Common myeloid progenitor, CD34-positive (primary cell): ENCODE measurements at regions of chr17 and their contacts with region 1.

Region 1: GRCh38 chr17:75077496-75078283 is 10.1 kb upstream of the SLC16A5 start:
- DNase-seq: peak; percentile 47 to 82 (median 72)
- H3K4me3 ChIP-seq: peak overlapping the region in 6 of 7 experiments; percentile 19 to 75 (median 59)
- H3K27ac ChIP-seq: no peak overlapping the region
- H3K4me1 ChIP-seq: peaks cover 0 to 20% (median 9%) of the 10 kb centered on the region in 4 experiments
- H3K27me3 ChIP-seq: no peaks in the 10 kb centered on the region

Region 2: DNA sequence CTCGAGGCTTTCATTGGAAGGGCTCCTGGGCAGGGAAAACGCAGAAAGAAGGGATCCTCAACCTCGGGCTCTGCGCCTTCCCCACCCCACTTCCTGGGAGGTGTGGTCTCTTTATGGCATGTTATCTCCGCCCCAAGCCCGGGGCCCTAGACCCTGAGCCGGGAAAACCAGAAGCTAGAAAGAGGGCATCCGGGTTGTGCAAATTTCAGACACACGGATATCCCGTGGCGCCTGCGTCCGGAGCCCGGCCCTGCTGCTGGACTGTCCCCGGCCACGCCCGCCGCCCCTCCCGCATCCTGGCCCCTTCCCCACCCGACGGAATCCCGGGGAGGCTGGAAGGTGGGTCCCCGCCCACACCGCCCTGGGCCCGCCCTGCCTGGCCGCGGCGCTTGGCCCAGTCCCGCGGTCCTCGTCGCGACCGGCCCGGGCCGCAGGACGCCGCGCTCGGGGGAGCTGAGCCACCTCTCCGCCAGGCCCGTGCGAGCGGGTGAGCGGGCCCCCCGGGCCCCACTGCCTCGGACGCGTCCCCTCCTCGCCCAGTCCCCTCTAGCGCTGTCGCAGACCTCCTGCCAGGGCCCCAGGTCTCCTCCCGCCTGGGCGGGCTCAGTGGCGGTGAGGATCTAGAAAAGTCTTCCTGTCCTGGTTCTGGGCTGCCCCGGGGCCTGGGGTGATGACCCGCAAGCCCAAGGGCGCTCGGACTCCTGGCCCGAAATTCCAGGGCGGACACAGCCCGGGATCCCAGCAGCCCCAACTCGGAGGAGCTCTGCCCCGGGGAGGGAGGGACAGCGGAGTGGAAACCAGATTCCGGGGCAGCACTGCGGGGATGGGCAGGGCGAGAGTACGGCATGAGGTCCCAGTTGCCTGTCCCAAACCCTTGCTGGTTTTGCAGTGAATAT is 10.1 kb after region 1 on chr17 and contains the start of gene SLC16A5:
- CTCF ChIA-PET with region 1: interaction called, 16 read pairs
- POLR2A ChIA-PET with region 1: interaction called, 7 read pairs
- DNase-seq: peak in 2 of 3 donors; percentile 42 to 52
- H3K4me3 ChIP-seq: peak within 1 kb of the TSS; percentile 7 to 87 (median 75)
- H3K27ac ChIP-seq: peak within 1 kb of the TSS in 1 of 2 experiments; percentile 67
- H3K4me1 ChIP-seq: peaks cover 0 to 54% (median 29%) of the 10 kb centered on the region in 4 experiments
- H3K27me3 ChIP-seq: no peaks in the 10 kb centered on the region

Region 3: DNA sequence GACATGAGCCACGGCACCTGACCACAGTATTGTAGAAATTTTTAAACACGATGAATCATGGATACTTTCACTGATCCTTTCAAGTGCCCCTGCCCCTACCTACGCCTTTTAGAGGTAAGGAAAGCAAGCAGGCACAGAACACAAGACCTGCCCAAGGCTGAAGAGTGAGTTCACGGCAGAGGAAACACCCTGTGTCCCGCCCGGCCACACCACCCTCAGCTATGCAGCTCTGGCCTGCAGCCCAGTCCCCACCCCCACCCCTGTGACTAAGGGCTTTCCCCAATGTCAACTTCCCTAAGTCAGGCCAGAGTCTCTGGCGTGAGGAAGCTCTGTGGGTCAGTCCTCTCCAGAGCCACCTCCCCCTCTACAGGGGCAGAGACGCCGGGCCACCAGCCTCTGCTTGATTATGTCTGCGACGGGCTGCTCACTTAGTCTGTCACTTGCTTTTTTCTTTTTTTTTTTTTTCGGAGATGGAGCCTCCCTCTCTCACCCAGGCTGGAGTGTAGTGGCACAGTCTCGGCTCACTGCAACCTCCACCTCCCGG is 18.5 kb after region 1 on chr17:
- CTCF ChIA-PET with region 1: interaction called, 14 read pairs
- POLR2A ChIA-PET with region 1: interaction called, 3 read pairs
- DNase-seq: peak; percentile 78 to 95 (median 95)
- H3K4me3 ChIP-seq: peak overlapping the region in 2 of 7 experiments; percentile 26 to 50
- H3K27ac ChIP-seq: peak overlapping the region in 1 of 2 experiments; percentile 64
- H3K4me1 ChIP-seq: peaks cover 0 to 41% (median 18%) of the 10 kb centered on the region in 4 experiments
- H3K27me3 ChIP-seq: no peaks in the 10 kb centered on the region